Activated CD4-positive, alpha-beta T cell treated with anti-CD3 and anti-CD28 coated beads, Interleukin-2, amount 10 ng/mL, durations not matched to agents 24 days and 14 days (primary cell): ENCODE measurements at regions of chr17 and their contacts with region 1.

Region 1: DNA sequence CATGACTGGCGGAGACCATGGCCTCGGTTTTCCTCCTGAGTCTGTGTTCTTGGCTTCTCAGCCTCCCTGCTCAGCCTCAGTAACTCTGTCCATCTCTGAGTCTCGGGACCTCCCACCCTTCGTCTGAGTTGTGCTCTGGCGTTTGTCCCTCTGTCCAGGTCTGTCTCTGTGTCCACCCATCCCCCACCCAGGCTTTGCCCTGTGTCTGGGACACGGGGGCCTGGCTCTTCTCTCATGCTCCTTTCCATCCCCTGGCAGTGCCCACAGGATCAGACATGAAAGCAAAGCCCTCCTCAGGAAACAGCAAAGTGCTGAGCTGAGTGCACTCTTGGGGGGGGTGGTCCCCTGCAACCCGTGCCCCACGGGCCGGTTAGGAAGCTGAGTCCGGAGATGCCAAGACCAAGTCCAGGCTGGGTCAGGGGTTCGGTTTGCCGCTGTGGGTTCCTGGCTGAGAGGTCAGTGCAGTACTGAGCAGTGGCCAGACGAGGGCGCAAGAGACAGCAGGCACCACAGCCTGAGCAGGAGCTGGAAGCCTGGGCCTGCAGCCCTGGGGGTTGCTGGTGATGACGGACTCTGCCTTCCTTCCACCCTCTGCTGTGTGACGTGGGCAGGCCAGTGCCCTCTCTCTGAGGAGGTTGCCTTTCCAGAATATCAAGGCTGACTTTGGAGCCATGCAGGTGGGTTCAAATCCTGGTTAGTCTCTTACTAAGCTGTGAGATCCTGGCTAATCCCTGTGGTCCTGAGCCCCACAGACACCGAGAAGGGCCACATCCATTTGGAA is 2.5 kb downstream of the P2RX1 start:
- DNase-seq: peak; percentile 95
- H3K4me3 Mint-ChIP-seq: no peak overlapping the region
- H3K27ac Mint-ChIP-seq: peak overlapping the region; percentile 25
- H3K4me1 Mint-ChIP-seq: peaks cover 28% of the 10 kb centered on the region
- H3K27me3 Mint-ChIP-seq: no peaks in the 10 kb centered on the region

Region 2: DNA sequence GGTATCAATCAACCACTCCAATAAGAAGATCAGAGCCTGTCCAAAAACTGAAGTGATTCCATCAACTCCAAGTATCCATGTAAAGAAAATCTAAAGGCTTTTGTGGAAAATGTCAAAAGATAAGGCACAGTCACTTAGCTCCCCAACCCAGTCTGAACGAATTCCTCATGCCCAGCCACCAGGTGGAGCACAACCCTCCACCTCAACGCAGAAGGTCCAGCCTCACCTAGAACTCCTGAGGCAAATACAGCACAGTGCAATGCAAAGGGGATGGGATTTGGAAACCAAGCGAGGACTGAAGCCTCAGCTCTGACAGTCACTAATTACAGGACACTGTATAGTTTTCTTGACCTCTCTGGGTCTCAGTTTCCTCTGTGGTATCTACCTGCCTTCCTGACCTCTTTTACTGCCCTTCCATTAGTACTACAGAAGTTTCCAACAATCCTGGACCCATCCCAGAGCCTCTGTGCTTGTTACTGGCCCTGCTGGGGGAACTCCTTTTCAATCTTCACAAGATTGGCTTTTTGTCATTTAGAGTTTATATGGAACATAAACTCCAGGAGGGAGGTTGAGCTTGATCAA is 69.7 kb before region 1 on chr17:
- intact Hi-C with region 1: no loop called
- DNase-seq: peak; percentile 86
- H3K4me3 Mint-ChIP-seq: peak overlapping the region; percentile 97
- H3K27ac Mint-ChIP-seq: peak overlapping the region; percentile 52
- H3K4me1 Mint-ChIP-seq: peaks cover 27% of the 10 kb centered on the region
- H3K27me3 Mint-ChIP-seq: peaks cover 6% of the 10 kb centered on the region

Region 3: GRCh38 chr17:3893003-3893719 is 20.6 kb before region 1 on chr17 and contains the start of gene CAMKK1:
- intact Hi-C with region 1: loop called (anchors 2 kb)
- DNase-seq: peak; percentile 98
- H3K4me3 Mint-ChIP-seq: peak within 1 kb of the TSS; percentile 86
- H3K27ac Mint-ChIP-seq: peak within 1 kb of the TSS; percentile 84
- H3K4me1 Mint-ChIP-seq: peaks cover 24% of the 10 kb centered on the region
- H3K27me3 Mint-ChIP-seq: peaks cover 7% of the 10 kb centered on the region
- total RNA-seq, gene CAMKK1: 8.6 and 9.2 TPM in 2 replicates

Region 4: DNA sequence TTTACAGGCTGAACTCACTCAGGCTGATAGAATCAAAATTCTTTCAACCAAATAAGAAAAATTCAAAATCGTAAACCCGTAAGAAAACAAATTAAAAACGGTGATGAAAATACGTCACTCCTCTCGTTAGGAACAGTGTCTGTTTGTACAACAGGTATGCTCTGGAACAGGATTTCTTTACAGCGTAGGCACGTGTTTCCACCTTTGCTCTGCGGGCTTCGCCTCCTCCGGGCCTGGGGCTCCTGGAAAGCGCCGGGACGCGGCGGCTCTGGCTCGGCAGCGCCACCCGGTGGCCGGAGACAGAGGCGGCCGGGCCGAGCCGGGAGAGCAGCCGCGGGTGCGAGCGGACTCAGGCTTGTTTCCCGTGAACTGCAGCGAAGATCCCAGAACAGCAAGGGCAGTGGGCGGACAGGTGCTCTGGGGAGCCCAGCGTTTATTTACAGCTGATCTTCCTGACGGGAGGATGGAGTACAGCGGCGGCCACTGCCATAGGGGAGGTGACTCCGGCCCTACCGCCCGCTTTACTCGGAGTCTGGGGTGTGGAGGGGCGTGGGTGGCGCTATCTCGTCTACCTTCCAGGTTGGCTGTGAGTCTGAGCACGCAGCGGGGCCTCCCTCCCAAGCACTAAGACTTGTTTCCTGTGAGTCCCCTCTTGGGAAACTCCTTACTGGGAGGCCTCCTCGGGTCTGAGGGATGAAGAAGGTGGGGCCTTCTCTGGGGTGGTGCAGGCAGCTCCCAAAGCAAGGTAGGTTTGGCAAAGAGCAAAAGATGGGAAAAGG is 91.0 kb after region 1 on chr17:
- intact Hi-C with region 1: loop called (anchors 1 kb)
- DNase-seq: peak; percentile 89
- H3K4me3 Mint-ChIP-seq: no peak overlapping the region
- H3K27ac Mint-ChIP-seq: no peak overlapping the region
- H3K4me1 Mint-ChIP-seq: peaks cover 7% of the 10 kb centered on the region
- H3K27me3 Mint-ChIP-seq: peaks cover 4% of the 10 kb centered on the region

Region 5: DNA sequence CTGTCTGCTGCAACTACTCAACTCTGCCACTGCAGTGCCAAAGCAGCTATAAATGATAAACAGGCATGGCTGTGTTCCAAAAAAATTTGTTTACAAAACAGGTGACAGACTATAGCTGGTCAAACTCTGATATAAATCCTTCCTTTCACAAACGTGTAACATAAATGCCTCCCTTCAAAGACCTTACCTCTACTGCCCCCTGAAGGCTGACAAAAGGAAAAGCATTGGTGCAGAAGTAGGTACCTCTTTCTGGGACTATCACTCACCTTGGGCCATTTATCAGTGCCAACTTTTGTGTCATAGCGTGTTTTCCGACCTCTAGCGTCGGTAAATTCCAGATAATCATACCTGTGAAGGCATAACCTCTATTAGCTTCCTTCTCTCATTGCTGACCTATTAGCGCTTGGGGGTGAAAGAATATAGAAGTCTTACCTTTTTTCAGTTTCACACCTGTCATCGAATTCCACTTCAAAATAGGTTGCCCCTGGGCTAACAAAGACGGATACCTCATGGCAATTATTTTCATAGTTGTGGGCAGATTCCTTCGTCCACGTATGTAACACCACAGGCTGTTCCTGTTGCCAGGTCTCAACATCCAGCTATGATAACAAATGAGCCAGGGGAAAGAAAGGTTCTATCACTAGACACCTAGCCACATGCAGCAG is 161.2 kb after region 1 on chr17:
- intact Hi-C with region 1: loop called (anchors 10 kb)
- DNase-seq: peak; percentile 76
- H3K4me3 Mint-ChIP-seq: no peak overlapping the region
- H3K27ac Mint-ChIP-seq: no peak overlapping the region
- H3K4me1 Mint-ChIP-seq: no peaks in the 10 kb centered on the region
- H3K27me3 Mint-ChIP-seq: no peaks in the 10 kb centered on the region

Region 6: GRCh38 chr17:4127555-4127954 is 213.8 kb after region 1 on chr17:
- intact Hi-C with region 1: no loop called
- DNase-seq: no peak
- H3K4me3 Mint-ChIP-seq: no peak overlapping the region
- H3K27ac Mint-ChIP-seq: no peak overlapping the region
- H3K4me1 Mint-ChIP-seq: peaks cover 14% of the 10 kb centered on the region
- H3K27me3 Mint-ChIP-seq: no peaks in the 10 kb centered on the region